Left cardiac atrium (tissue), 4 donors: ENCODE measurements at regions of chr5 and their contacts with region 1.

Region 1: GRCh38 chr5:64914396-64914795 is 145.7 kb downstream of the CWC27 start:
- DNase-seq: no peak
- ATAC-seq: no peak

Region 2: DNA sequence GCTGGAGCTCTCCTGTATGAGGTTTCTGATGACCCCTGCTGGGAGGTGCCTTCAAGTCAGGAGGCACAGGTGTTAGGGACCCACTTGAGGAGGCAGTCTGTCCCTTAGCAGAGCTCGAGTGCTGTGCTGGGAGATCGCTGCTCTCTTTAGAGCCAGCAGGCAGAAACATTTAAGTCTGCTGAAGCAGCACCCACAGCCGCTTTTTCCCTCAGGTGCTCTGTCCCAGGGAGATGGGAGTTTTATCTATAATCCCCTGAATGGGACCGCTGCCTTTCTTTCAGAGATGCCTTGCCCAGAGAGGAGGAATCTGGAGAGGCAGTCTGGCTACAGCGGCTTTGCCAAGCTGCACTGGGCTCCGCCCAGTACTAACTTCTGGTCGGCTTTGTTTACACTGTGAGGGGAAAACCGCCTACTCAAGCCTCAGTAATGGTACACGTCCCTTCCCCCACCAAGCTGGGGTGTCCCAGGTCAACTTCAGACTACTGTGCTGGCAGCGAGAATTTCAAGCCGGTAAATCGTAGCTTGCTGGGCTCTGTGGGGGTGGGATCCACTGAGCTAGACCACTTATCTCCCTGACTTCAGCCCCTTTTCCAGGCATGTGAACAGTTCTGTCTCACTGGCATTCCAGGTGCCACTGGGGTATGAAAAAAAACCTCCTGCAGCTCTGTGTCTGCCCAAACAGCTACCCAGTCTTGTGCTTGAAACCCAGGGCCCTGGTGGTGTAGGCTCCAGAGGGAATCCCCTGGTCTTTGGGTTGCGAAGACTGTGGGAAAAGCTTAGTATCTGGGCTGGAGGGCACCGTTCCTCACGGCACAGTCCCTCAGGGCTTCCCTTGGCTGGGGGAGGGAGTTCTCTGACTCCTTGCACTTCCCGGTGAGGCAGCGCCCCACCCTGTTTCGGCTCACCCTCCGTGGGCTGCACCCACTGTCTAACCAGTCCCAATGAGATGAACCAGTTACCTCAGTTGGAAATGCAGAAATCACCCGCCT is 25.4 kb after region 1 on chr5:
- intact Hi-C with region 1: loop called in 1 of 2 experiments (anchors 2 kb)
- DNase-seq: peak; percentile 27
- ATAC-seq: peak; percentile 55 to 63

Region 3: GRCh38 chr5:65252977-65253376 is 338.6 kb after region 1 on chr5:
- intact Hi-C with region 1: no loop called
- DNase-seq: no peak
- ATAC-seq: no peak